Left cardiac atrium (tissue), 4 donors: ENCODE measurements at regions of chr22 and their contacts with region 1.

Region 1: GRCh38 chr22:43385770-43386641 is 25.8 kb upstream of the MPPED1 start:
- DNase-seq: peak; percentile 80
- ATAC-seq: peak; percentile 90 to 92

Region 2: DNA sequence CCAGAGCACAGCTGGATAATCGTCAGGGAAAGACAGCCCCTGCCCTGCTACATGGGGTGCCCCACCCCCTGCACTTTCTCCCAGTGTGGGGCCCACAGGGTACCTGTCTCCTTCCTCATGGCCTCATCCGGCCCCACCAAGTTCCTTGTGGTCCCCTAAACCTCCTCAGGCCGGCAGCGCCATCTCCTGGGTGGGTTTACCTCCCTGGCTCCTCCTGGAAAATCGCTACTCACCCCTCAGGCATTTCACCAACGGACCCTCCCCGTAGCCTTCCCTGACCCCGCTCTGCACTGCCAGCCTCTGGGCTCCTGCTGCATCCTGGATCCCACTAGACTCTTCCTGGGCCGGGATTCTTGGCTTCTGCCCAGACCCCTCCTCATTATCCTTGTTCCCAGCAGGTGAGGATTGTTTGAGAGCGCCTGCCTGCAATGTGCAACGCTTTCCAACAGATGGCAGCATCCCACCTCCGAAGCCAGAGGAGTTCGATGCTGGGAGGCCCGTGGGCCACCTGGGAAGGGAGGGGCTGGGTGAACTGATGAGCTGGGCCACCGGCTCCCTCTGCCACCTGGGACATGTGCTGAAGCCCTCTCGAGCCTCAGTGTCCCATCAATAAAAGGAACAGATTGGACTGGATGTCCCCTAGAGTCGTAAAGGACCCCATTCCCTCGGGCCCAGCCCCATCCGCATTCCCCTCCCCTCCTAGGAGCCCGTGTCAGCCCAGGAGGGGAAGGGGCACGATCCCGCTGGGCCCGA is 154.9 kb before region 1 on chr22:
- intact Hi-C with region 1: loop called in 1 of 2 experiments (anchors 1 kb)
- DNase-seq: peak; percentile 43
- ATAC-seq: peak; percentile 25 to 50

Region 3: GRCh38 chr22:43273902-43274484 is 112.0 kb before region 1 on chr22:
- intact Hi-C with region 1: loop called (anchors 2 to 5 kb)
- DNase-seq: no peak
- ATAC-seq: peak; percentile 60 to 70

Region 4: GRCh38 chr22:43346521-43346929 is 39.5 kb before region 1 on chr22:
- intact Hi-C with region 1: no loop called
- DNase-seq: peak; percentile 65
- ATAC-seq: peak; percentile 59 to 65

Region 5: DNA sequence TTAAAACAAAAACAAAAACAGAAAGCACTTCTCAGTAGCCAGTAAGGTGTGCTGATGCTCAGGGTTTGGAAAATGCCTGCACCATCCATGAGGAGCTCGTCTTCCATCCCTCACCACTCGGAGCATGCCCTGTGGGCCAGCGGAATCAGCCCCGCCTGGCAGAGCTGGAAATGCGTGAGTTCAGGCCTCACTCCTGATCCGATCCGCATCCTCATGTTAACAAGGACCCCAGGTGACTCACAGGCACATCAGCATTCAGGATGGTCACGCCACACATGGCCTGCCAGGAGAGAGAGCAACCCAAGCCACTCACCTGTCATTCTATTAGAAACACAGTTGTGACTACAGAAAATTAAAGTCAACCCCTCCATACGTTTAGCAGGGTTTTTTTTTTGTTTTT is 214.3 kb after region 1 on chr22:
- intact Hi-C with region 1: no loop called
- DNase-seq: no peak
- ATAC-seq: no peak

Region 6: DNA sequence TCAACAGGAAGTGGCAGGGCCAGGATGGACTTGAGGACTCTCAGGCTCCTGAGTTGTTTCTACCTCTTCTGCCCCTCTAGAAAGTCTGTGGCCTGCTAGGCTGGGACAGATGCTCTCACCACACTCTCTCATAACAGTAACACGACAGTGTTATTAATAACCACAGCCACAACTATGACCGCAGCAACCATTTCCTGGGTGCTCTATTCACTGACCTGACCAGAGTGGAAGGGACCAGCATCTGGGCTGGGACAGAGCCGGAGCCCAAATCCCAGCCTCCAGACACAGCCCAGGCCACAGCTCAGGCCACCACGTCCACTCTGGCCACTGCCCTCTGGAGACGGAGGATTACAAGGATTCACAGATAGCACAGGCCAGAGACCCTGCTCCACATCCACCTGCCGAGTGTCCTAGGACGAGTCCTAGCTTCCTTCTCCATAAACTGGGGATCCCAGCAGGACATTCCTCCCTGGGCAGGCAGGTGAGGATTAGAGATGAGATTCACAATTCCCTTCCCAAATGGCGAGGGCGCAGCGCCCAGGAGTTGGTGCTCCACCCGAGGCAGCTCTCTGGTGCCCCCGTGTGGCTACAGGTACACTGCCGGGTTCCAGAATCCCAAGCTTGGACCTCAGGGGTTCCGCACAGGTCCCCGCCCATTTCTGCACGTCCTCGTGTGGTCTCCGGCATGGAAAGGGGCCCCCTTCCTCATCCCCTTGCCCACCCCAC is 498.8 kb after region 1 on chr22:
- intact Hi-C with region 1: loop called in 1 of 2 experiments (anchors 10 kb)
- DNase-seq: peak; percentile 71
- ATAC-seq: peak; percentile 48 to 54

Region 7: DNA sequence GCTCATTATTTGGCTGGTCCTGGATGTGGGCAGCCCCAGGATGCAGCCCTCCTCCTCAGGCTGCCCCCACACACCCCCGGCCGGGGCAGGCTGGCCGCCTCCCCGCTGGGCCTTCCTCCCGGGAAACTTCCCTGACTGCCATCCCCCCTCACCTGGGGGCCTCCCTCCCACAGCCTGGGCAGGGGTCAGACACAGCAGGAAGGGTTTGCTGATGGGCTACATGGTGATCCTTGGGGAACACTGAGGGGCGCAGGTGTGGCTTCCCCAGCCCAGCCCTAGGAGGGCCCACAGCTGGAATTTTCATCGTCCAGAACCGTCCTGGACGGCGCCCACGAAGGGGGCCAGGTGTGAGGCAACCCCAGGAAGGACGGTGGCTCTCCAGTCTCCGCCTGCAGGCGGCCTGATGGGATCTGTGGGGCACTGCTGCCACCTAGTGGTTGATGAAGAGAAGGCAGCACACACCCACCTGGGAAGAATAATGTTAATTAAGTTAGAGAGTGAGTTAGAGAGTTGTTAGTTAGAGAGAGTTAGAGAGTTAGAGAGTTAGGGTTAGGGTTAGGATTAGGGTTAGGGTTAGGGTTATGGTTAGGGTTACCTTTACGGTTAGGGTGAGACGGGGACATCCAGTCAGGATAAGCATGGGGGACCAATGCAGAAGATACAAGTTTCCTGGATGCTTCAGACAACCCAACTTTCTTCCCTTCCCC is 1240.1 kb after region 1 on chr22:
- intact Hi-C with region 1: loop called in 1 of 2 experiments (anchors 10 kb)
- DNase-seq: peak; percentile 75
- ATAC-seq: peak; percentile 75 to 81